SK-N-SH (cell line): ENCODE measurements at regions of chr6 and their contacts with region 1.

Region 1: DNA sequence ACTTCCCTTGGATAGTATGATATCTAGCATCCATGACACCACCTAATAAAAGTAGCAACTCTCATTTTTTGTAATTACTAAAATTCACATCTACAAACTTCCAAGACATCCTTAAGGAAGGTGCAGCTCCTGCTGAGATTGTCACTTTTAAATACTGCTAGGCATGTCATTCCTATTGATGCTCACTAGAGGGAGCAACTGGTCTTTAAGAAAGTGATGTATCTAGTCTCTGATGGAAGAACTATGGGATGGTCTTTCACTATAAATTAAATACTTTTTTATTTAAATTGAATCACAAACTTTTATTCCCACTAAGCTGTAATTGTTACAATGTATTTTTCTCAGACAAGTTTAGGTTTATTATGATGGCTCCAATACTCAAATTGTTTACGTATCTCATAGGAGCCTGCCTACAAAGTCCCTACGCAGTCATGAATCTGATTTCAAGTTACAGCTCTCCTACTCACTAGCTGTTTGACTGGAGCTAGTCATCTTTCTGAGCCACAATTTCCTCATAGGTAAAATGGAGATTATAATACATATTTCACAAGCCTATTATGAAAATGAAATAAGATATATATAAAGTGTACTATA is 8.1 kb upstream of the TSPYL1 start:
- DNase-seq: peak; percentile 21
- H3K4me3 ChIP-seq: no peak overlapping the region
- H3K27ac ChIP-seq: no peak overlapping the region
- H3K4me1 ChIP-seq: no peaks in the 10 kb centered on the region
- H3K27me3 ChIP-seq: no peaks in the 10 kb centered on the region
- CTCF ChIP-seq: peak; percentile 92
- EP300 ChIP-seq: no peak
- RAD21 ChIP-seq: peak; percentile 90

Region 2: GRCh38 chr6:116268589-116269293 is 19.0 kb before region 1 on chr6:
- CTCF ChIA-PET with region 1: interaction called, 25 read pairs
- POLR2A ChIA-PET with region 1: no interaction called
- DNase-seq: peak; percentile 76
- H3K4me3 ChIP-seq: no peak overlapping the region; a peak in 1 of 4 replicates
- H3K27ac ChIP-seq: peak overlapping the region; percentile 42 to 63; a peak in 3 of 4 replicates
- H3K4me1 ChIP-seq: peaks cover 5 to 12% of the 10 kb centered on the region in 2 experiments; a peak in 3 of 4 replicates
- H3K27me3 ChIP-seq: no peaks in the 10 kb centered on the region
- CTCF ChIP-seq: peak; percentile 95
- EP300 ChIP-seq: peak in 1 of 2 experiments; percentile 20; a peak in 1 of 4 replicates
- RAD21 ChIP-seq: peak; percentile 84

Region 3: DNA sequence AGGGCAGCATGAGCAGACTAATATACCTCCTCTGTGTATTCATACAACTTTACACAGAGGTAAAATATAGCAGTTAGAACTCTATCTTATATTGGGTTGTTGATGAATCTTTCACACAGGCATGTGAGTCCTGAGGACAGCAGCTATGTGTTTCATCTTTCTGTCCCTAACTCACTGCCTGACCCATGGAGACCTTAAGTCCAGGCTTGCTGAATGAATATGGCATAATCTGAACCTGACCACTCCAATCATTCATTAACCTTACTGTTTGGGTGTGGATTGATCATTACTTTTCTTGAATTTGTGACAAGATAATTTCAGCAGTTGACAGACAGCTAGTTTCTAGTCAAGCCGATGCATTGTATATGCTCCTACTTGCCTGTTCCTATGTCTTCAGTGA is 19.2 kb after region 1 on chr6:
- CTCF ChIA-PET with region 1: interaction called, 16 read pairs
- POLR2A ChIA-PET with region 1: no interaction called
- DNase-seq: no peak
- H3K4me3 ChIP-seq: no peak overlapping the region
- H3K27ac ChIP-seq: no peak overlapping the region
- H3K4me1 ChIP-seq: no peaks in the 10 kb centered on the region
- H3K27me3 ChIP-seq: no peaks in the 10 kb centered on the region
- CTCF ChIP-seq: no peak
- EP300 ChIP-seq: no peak
- RAD21 ChIP-seq: no peak

Region 4: DNA sequence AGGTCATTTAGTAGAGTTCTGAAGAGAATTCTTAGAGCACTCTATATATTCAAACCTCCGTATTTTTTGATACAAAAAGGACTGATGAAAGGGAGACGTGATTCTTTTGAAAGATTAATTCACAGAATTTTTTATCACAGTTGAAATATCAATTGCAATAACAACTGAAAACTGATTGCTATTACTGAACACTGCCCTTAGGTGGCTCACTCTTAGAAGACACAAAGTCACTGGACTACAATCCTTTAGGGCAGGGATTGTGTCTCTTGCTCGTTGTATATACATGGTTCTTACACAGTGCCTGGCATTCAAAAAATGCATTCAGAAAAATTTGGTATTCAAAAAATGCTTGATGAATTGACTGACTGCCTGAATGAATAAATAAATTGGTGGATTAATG is 156.3 kb after region 1 on chr6:
- CTCF ChIA-PET with region 1: interaction called, 19 read pairs
- POLR2A ChIA-PET with region 1: no interaction called
- DNase-seq: peak; percentile 36
- H3K4me3 ChIP-seq: no peak overlapping the region
- H3K27ac ChIP-seq: no peak overlapping the region
- H3K4me1 ChIP-seq: peaks cover 0 to 11% of the 10 kb centered on the region in 2 experiments; a peak in 3 of 4 replicates
- H3K27me3 ChIP-seq: no peaks in the 10 kb centered on the region
- CTCF ChIP-seq: peak; percentile 65
- EP300 ChIP-seq: no peak
- RAD21 ChIP-seq: peak; percentile 56

Region 5: DNA sequence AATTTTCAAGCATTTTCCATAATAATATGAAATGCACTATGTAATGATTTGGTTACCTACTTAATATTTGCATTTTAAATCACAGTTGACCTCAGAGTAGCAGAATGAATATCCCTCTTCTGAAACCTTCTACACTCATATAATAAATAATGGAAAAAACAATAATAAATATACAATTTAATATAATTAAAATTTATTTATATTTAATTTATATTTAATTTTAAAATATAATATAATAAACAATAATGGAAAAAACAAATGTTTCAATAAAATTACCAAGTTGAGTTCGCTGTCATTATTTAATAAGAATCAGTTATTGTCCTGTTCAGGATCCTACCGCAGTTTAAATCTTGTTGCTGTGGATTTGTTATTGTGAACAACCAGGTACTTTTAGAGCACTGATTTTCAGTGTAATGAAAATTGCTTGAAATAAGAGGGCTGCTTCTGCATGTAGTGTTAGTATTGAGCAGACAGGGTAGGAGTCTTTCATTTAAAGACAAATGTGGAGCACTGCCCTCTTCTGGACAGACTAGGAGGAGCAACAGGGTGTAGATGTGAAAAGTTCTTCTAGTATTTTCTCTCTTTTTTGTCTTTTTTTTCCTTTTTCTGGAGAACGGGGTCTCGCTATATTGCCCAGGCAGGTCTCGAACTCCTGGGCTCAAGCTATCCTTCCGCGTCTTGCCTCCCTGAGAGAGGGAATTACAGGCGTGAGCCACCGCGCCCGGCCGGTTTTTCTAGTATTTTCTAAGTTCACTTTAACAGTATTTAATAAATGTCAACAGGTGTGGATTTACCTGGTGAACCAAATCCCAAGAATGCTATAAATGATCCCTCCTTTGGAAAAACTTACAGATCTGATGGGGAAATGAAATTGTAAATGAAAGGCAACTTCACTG is 244.1 kb after region 1 on chr6:
- CTCF ChIA-PET with region 1: interaction called, 55 read pairs
- POLR2A ChIA-PET with region 1: no interaction called
- DNase-seq: peak; percentile 56
- H3K4me3 ChIP-seq: no peak overlapping the region
- H3K27ac ChIP-seq: no peak overlapping the region
- H3K4me1 ChIP-seq: peaks cover 0 to 21% of the 10 kb centered on the region in 2 experiments; a peak in 2 of 4 replicates
- H3K27me3 ChIP-seq: no peaks in the 10 kb centered on the region
- CTCF ChIP-seq: peak; percentile 73
- EP300 ChIP-seq: no peak
- RAD21 ChIP-seq: peak; percentile 70

Region 6: DNA sequence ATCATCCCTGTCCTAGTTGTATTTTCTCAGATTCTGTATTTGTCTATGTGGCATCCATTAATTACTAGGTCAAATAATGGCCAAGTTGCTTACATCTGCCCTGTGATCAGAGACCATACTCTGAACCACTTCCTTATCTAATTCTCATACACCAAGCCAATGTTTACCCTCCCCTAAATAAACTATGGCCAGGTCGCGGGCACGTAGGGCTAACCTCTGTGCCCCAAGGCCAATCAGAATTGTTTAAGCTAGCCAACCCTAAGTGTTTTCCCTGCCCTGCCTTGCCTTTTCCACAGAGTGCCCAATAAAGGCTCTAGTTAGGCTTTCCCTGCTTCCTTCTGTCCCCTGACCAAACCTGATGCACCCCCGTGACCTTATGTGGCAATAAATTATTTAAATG is 263.0 kb after region 1 on chr6:
- CTCF ChIA-PET with region 1: interaction called, 13 read pairs
- POLR2A ChIA-PET with region 1: no interaction called
- DNase-seq: no peak
- H3K4me3 ChIP-seq: no peak overlapping the region
- H3K27ac ChIP-seq: no peak overlapping the region
- H3K4me1 ChIP-seq: no peaks in the 10 kb centered on the region; a peak in 1 of 4 replicates
- H3K27me3 ChIP-seq: no peaks in the 10 kb centered on the region
- CTCF ChIP-seq: no peak
- EP300 ChIP-seq: no peak
- RAD21 ChIP-seq: no peak

Region 7: GRCh38 chr6:116570856-116571682 is 283.3 kb after region 1 on chr6 and contains the start of gene RWDD1:
- CTCF ChIA-PET with region 1: interaction called, 38 read pairs
- POLR2A ChIA-PET with region 1: no interaction called
- DNase-seq: peak; percentile 97
- H3K4me3 ChIP-seq: peak within 1 kb of the TSS; percentile 97 to 98
- H3K27ac ChIP-seq: peak within 1 kb of the TSS; percentile 84 to 96
- H3K4me1 ChIP-seq: peaks cover 4 to 6% of the 10 kb centered on the region in 2 experiments; a peak in 3 of 4 replicates
- H3K27me3 ChIP-seq: no peaks in the 10 kb centered on the region
- CTCF ChIP-seq: no peak
- EP300 ChIP-seq: no peak
- RAD21 ChIP-seq: no peak
- polyA plus RNA-seq, gene RWDD1: 17.7 and 18.8 TPM in 2 replicates